ENCODE measurements at regions of chr12 and their contacts with region 1.

Region 1: DNA sequence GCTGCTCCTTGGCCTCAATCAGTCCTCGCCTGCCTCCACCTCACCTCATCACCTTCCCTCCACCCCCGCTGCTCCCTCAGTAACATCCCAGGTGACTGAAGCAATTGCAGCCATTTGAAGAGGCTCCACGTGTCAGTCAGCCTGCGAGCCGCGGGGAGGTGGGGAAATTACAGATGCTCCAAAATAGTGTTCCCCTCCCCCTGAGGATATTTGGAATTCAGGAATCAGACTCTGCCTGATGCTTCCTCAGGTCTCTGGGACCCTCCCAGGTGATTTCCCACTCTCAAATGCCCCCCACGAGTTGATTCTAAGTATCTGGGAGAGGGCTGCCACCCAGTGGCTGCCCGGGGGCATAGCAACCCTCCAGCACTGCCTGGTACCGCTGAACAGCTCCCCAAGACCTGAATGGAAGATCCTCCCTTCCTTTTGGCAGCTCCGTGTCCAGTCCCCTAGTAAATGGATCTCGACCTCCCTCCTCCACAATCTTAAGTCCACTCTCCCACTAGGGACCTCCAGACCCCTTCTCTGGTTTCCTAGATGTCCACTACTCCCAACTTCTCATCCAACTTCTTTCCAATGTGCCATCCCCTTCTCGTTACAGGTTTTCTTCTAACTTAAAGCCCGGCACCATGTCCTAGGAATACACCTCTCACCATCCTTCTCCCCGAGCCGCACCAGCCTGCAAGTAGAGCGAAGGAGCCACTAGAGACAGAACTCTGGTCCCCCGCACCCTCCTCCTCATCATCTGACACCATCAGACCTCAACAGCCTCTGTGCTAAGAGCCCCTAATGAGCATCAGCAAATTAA is 1.4 kb upstream of the ASIC1 start:
- DNase-seq: peak; percentile 59 to 85
- ATAC-seq: peak; percentile 51 to 77; a peak in 5 of 6 replicates
- H3K4me3 ChIP-seq: peak overlapping the region; percentile 85; the same call in 2 of the 3 replicates
- H3K27ac ChIP-seq: peak overlapping the region; percentile 38 to 55; a peak in 3 of 6 replicates
- H3K4me1 ChIP-seq: peaks cover 18% of the 10 kb centered on the region
- CTCF ChIP-seq: peak; percentile 96
- EP300 ChIP-seq: no peak
- POLR2A ChIP-seq: no peak
- RAD21 ChIP-seq: peak; percentile 80 to 87

Region 2: GRCh38 chr12:49945394-49946080 is 110.5 kb before region 1 on chr12:
- CTCF ChIA-PET with region 1: interaction called, 15 read pairs
- POLR2A ChIA-PET with region 1: no interaction called
- DNase-seq: peak; percentile 82 to 93
- ATAC-seq: peak; percentile 97 to 99
- H3K4me3 ChIP-seq: no peak overlapping the region
- H3K27ac ChIP-seq: peak overlapping the region; percentile 6 to 59; a peak in 3 of 6 replicates
- H3K4me1 ChIP-seq: 0 out of 3 replicates have a peak, but pooled peaks cover 7% of the 10 kb centered on the region
- CTCF ChIP-seq: peak; percentile 91
- EP300 ChIP-seq: no peak
- POLR2A ChIP-seq: no peak
- RAD21 ChIP-seq: peak; percentile 54 to 55; a peak in 4 of 5 replicates

Region 3: DNA sequence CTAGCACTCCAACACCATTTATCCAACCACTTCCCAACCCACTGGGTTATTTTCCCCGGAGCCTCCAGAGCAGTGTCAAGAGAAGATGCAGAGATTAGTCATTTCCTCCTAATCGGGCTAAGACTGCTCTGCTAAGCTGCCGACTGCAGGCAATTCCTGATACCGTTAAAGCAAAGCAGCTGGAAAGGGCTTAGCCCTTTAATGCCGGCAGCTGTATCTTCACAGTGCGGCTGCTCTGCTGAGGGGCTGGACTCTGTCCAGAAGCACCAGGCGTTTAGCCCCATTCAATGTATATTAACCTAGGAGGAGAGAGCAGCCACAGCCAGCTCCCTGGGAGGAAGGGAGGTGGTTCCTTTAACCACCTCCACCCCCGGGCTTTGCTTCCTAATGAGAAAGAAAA is 72.1 kb before region 1 on chr12:
- CTCF ChIA-PET with region 1: interaction called, 708 read pairs
- POLR2A ChIA-PET with region 1: no interaction called
- DNase-seq: no peak
- ATAC-seq: peak; percentile 55 to 57; a peak in 3 of 6 replicates
- H3K4me3 ChIP-seq: no peak overlapping the region
- H3K27ac ChIP-seq: no peak overlapping the region
- H3K4me1 ChIP-seq: no peaks in the 10 kb centered on the region
- CTCF ChIP-seq: no peak
- EP300 ChIP-seq: no peak
- POLR2A ChIP-seq: no peak
- RAD21 ChIP-seq: no peak

Region 4: DNA sequence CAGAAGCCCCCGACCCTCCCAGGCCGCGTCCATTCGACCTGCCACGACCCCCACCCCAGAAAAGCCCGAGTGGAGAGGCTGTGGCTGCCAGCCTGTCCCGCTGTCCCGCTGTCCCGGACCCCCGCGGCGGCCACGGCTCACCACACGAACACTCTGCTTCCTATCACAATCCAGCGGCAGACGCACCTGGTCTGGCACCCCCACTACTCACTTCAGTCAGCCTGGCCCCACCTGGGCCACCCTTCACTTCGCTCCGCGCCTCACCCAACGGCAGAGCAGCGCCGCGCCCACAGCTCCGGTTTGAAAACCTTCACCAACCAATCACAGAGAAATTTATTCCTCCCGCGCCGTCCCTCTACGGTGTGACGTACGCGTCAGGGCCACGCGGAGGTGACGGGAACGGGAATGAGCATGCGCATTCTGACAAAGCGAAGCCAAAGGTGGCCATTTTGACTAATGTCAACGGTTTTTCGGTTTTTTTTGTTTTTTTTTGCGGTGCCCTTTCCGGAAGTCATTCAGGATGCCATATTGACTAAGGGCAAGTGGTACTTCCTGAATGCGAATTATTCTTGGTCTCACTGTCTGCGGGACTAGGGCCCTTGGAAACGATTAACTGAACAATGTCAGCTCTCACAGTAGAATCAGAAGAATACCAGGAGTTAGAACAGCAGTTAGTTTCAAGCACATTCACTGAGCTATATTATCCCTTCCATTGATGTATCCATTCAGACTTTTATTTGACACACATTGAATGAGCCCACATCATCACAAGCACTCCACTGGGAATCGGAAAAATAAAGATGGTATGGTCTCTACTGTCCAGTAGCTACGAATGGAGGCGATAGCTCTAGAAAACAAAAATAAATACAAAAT is 30.6 kb before region 1 on chr12 and contains the start of gene RACGAP1:
- CTCF ChIA-PET with region 1: interaction called, 16 read pairs
- POLR2A ChIA-PET with region 1: no interaction called
- DNase-seq: peak; percentile 97 to 99
- ATAC-seq: peak; percentile 99
- H3K4me3 ChIP-seq: peak within 1 kb of the TSS; percentile 83
- H3K27ac ChIP-seq: peak within 1 kb of the TSS; percentile 82 to 91
- H3K4me1 ChIP-seq: peaks cover 11% of the 10 kb centered on the region; the same call in 2 of the 3 replicates
- CTCF ChIP-seq: no peak
- EP300 ChIP-seq: no peak
- POLR2A ChIP-seq: no peak; the same call in 1 of the 2 replicates
- RAD21 ChIP-seq: no peak
- polyA plus RNA-seq, gene RACGAP1: 99.2 and 103 TPM in 2 replicates

Region 5: GRCh38 chr12:50038336-50038735 is 17.7 kb before region 1 on chr12:
- CTCF ChIA-PET with region 1: interaction called, 185 read pairs
- POLR2A ChIA-PET with region 1: no interaction called
- DNase-seq: no peak
- ATAC-seq: no peak
- H3K4me3 ChIP-seq: no peak overlapping the region
- H3K27ac ChIP-seq: no peak overlapping the region
- H3K4me1 ChIP-seq: no peaks in the 10 kb centered on the region
- CTCF ChIP-seq: no peak
- EP300 ChIP-seq: no peak
- POLR2A ChIP-seq: no peak
- RAD21 ChIP-seq: no peak

Region 6: DNA sequence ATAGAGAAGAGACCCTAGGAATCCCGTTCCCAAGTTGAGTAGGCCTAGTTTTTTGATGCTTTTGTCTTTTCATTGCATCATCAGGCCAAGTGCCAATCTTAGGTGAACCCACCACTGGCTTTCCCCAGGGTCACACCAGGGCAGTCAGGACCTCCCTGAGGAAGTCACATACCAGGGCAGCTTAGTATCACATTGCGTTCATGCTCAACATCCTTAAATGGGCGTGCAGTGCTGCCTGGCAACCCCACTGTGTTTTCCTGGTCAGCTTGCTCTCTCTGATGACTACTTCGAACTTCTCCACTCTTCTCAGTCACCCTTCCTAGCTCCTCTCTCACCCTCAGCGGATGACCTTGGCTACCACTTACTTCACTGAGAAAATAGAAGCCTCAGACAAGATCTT is 10.4 kb after region 1 on chr12:
- CTCF ChIA-PET with region 1: interaction called, 43 read pairs
- POLR2A ChIA-PET with region 1: interaction called, 3 read pairs
- DNase-seq: peak in 1 of 2 experiments; percentile 72
- ATAC-seq: peak in 1 of 2 experiments; percentile 57; a peak in 3 of 6 replicates
- H3K4me3 ChIP-seq: no peak overlapping the region
- H3K27ac ChIP-seq: no peak overlapping the region
- H3K4me1 ChIP-seq: peaks cover 12% of the 10 kb centered on the region; the same call in 2 of the 3 replicates
- CTCF ChIP-seq: no peak
- EP300 ChIP-seq: no peak
- POLR2A ChIP-seq: no peak
- RAD21 ChIP-seq: no peak